Activated CD4-positive, alpha-beta memory T cell treated with anti-CD3 and anti-CD28 coated beads for 36 hours (primary cell): ENCODE measurements at regions of chr11 and their contacts with region 1.

Region 1: DNA sequence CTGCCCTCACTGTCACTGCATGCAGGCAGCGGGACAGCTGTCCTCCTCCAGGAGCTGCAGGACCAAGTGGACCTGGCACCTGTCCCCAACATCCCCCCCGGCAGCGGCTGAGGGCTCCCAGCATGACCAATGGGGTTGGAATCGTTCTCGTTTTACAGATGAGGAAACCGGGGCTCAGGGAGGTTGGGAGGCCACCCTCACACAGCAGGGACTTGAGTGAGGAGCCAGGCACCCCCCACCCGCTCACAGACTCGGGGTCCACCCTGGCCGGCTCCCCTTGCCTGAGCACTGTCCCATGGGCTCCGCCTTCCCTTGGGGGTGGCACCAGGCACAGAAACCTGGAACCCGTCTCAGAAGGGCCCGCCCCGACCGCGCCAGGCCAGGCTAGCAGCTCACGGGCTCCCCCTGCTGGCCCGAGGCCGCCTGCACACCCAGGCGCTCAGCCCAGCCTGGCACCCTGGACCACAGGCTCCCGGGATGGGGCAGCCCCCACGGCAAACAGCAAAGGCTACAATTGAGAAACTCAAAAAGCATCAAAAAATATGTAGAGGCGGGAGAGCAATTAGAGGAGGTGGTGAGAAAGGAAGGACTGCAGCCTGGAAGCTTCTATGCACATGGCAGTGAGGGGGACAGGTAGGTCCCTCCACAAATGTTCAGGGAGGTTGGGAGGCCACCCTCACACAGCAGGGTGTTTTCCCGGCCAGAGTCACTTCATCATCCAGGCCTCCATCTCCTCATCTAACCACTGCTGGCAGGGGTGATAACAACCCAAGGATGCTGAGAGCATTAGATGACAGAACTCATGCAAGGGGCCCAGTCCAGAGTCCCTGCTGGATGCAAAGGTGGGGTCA is 12.8 kb downstream of the MACROD1 start:
- DNase-seq: peak; percentile 78
- H3K4me3 Mint-ChIP-seq: no peak overlapping the region
- H3K27ac Mint-ChIP-seq: no peak overlapping the region
- H3K4me1 Mint-ChIP-seq: peaks cover 3% of the 10 kb centered on the region
- H3K27me3 Mint-ChIP-seq: no peaks in the 10 kb centered on the region

Region 2: GRCh38 chr11:64165849-64166635 is 13.0 kb after region 1 on chr11 and contains the start of gene MACROD1:
- CTCF ChIA-PET with region 1: interaction called, 20 read pairs
- POLR2A ChIA-PET with region 1: no interaction called
- intact Hi-C with region 1: no loop called
- DNase-seq: peak; percentile 88
- H3K4me3 Mint-ChIP-seq: peak within 1 kb of the TSS; percentile 87
- H3K27ac Mint-ChIP-seq: peak within 1 kb of the TSS; percentile 74
- H3K4me1 Mint-ChIP-seq: peaks cover 15% of the 10 kb centered on the region
- H3K27me3 Mint-ChIP-seq: no peaks in the 10 kb centered on the region
- total RNA-seq, gene MACROD1: 24.5 to 31.0 TPM